ENCODE measurements at regions of chr5 and their contacts with region 1.

Region 1: GRCh38 chr5:54533541-54534190 is 16.1 kb downstream of the SNX18 start:
- DNase-seq: peak; percentile 64
- H3K4me3 ChIP-seq: peak overlapping the region in 1 of 4 donors; percentile 6
- H3K27ac ChIP-seq: peak overlapping the region; percentile 60 to 69 (median 65)
- H3K4me1 ChIP-seq: peaks cover 41 to 70% (median 56%) of the 10 kb centered on the region in 4 donors
- H3K27me3 ChIP-seq: no peaks in the 10 kb centered on the region
- CTCF ChIP-seq: no peak
- EP300 ChIP-seq: no peak
- POLR2A ChIP-seq: no peak

Region 2: GRCh38 chr5:54601411-54602230 is 68.0 kb after region 1 on chr5:
- intact Hi-C with region 1: loop called (anchors 10 kb)
- DNase-seq: no peak
- H3K4me3 ChIP-seq: no peak overlapping the region
- H3K27ac ChIP-seq: peak overlapping the region; percentile 2 to 52 (median 44)
- H3K4me1 ChIP-seq: peaks cover 6 to 14% (median 8%) of the 10 kb centered on the region in 4 donors
- H3K27me3 ChIP-seq: no peaks in the 10 kb centered on the region
- CTCF ChIP-seq: no peak
- EP300 ChIP-seq: no peak
- POLR2A ChIP-seq: no peak

Region 3: DNA sequence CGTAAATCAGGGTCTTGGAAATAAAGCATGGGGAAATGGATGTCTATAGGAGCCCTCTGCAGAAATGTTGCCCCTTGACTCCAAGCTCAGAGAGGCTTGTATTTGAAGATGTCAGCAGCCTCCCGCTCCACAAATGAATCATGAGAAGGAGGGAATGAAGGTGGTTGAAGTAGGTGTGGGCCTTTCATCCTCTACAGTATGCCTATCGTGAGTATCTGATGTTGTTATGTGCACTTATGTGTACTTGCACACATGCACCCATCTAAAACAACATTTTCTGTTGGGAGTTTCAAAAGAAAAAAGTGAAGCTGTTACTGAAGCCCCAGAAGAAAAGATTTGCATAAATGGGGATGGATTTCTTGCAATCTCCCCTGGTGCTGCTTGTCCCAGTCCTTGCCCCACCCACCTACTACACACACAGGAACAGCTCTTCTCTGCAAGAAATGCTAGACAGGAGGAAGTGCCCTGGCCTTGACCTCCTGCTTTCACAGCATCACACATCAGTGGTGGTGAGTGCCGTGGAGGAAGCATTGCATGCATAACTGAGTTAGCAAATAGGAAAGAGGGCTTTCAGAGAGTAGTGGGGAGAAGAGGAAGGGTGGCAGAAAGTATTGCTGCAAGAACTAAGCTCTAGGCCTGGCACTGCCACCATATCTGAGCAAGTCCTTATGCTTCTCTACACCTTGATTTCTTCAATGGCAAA is 140.0 kb after region 1 on chr5:
- intact Hi-C with region 1: no loop called
- DNase-seq: no peak
- H3K4me3 ChIP-seq: no peak overlapping the region
- H3K27ac ChIP-seq: no peak overlapping the region
- H3K4me1 ChIP-seq: peaks cover 5 to 43% (median 38%) of the 10 kb centered on the region in 4 donors
- H3K27me3 ChIP-seq: no peaks in the 10 kb centered on the region
- CTCF ChIP-seq: no peak
- EP300 ChIP-seq: no peak
- POLR2A ChIP-seq: no peak

Measured in esophagus muscularis mucosa (tissue), 4 donors.